ENCODE measurements at regions of chr5 and their contacts with region 1.

Region 1: GRCh38 chr5:14108170-14108996 is 34.8 kb upstream of the TRIO start:
- DNase-seq: peak; percentile 59
- ATAC-seq: peak; percentile 92 to 95
- H3K4me3 ChIP-seq: peak overlapping the region; percentile 34
- H3K27ac ChIP-seq: no peak overlapping the region
- H3K4me1 ChIP-seq: peaks cover 25% of the 10 kb centered on the region
- H3K27me3 ChIP-seq: no peaks in the 10 kb centered on the region
- CTCF ChIP-seq: peak; percentile 74

Region 2: DNA sequence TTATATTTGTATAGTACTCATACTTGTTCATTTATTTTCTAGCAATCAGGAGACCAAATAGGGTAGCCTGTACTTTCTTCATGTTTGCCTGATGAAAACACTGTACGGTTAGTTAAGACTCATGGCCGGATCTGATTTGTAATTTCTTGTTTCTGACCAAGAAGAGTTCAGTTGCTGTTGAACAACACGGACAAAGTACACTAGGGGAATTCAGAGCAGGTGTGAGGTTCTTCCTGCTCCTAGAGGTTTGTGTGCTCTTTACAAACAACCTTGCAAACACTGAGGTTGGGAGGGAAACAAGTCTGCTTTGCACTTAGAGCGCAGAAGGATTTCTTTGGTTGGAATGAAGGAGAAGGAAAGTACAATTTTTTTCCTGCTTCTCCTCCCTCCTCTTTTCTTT is 104.5 kb after region 1 on chr5:
- intact Hi-C with region 1: no loop called
- DNase-seq: no peak
- ATAC-seq: peak; percentile 29 to 57
- H3K4me3 ChIP-seq: no peak overlapping the region
- H3K27ac ChIP-seq: peak overlapping the region; percentile 51
- H3K4me1 ChIP-seq: peaks cover 86% of the 10 kb centered on the region
- H3K27me3 ChIP-seq: no peaks in the 10 kb centered on the region
- CTCF ChIP-seq: no peak

Region 3: GRCh38 chr5:14270209-14270702 is 161.9 kb after region 1 on chr5:
- intact Hi-C with region 1: loop called (anchors 10 kb)
- DNase-seq: no peak
- ATAC-seq: peak; percentile 86 to 91
- H3K4me3 ChIP-seq: no peak overlapping the region
- H3K27ac ChIP-seq: peak overlapping the region; percentile 50
- H3K4me1 ChIP-seq: peaks cover 41% of the 10 kb centered on the region
- H3K27me3 ChIP-seq: no peaks in the 10 kb centered on the region
- CTCF ChIP-seq: peak; percentile 79

Measured in lower lobe of right lung (tissue), 2 donors.